HEK293 (cell line): ENCODE measurements at regions of chr5 and their contacts with region 1.

Region 1: GRCh38 chr5:173771121-173771724 is 116.9 kb upstream of the CPEB4 start:
- H3K4me3 ChIP-seq: no peak overlapping the region
- H3K27ac ChIP-seq: 0 out of 2 replicates have a peak overlapping the region, but pooled peaks have one; percentile 18
- H3K4me1 ChIP-seq: no peaks in the 10 kb centered on the region
- CTCF ChIP-seq: no peak

Region 2: DNA sequence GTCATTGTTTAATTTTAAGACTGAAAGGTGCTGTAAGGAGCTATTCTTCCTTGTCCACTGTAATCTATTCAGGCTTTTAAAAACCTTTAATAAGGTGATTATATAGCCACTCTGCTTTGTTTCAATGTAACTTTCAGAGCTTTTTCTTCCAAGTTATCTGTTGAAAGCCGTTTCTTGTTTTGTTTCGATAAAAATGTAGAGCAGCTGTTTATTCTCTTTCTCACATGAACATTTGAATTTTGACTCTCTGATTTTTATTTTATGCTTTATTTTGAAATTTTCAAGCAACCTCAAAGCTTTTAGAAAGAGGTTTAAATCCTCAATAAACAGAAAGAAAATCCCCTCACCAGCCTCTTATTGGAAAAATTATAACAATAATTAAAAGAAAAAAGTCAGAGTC is 164.2 kb after region 1 on chr5:
- CTCF ChIA-PET with region 1: no interaction called
- POLR2A ChIA-PET with region 1: interaction called, 10 read pairs
- H3K4me3 ChIP-seq: no peak overlapping the region
- H3K27ac ChIP-seq: no peak overlapping the region
- H3K4me1 ChIP-seq: no peaks in the 10 kb centered on the region
- CTCF ChIP-seq: no peak